Activated CD4-positive, alpha-beta T cell treated with anti-CD3 and anti-CD28 coated beads for 36 hours (primary cell): ENCODE measurements at regions of chr10 and their contacts with region 1.

Region 1: GRCh38 chr10:48363617-48364355 is 57.3 kb downstream of the MAPK8 start:
- DNase-seq: peak; percentile 48
- ATAC-seq: peak; percentile 44
- H3K4me3 Mint-ChIP-seq: no peak overlapping the region
- H3K27ac Mint-ChIP-seq: no peak overlapping the region
- H3K4me1 Mint-ChIP-seq: peaks cover 20% of the 10 kb centered on the region
- H3K27me3 Mint-ChIP-seq: no peaks in the 10 kb centered on the region

Region 2: GRCh38 chr10:48199580-48200377 is 164.0 kb before region 1 on chr10:
- CTCF ChIA-PET with region 1: no interaction called
- POLR2A ChIA-PET with region 1: no interaction called
- intact Hi-C with region 1: no loop called
- DNase-seq: no peak
- ATAC-seq: no peak
- H3K4me3 Mint-ChIP-seq: no peak overlapping the region
- H3K27ac Mint-ChIP-seq: no peak overlapping the region
- H3K4me1 Mint-ChIP-seq: peaks cover 4% of the 10 kb centered on the region
- H3K27me3 Mint-ChIP-seq: no peaks in the 10 kb centered on the region

Region 3: GRCh38 chr10:48306265-48306869 is 57.4 kb before region 1 on chr10 and contains the start of gene MAPK8:
- CTCF ChIA-PET with region 1: interaction called, 5 read pairs
- POLR2A ChIA-PET with region 1: no interaction called
- intact Hi-C with region 1: loop called in 1 of 2 experiments (anchors 2 kb)
- DNase-seq: peak; percentile 93
- ATAC-seq: peak; percentile 86
- H3K4me3 Mint-ChIP-seq: peak within 1 kb of the TSS; percentile 72
- H3K27ac Mint-ChIP-seq: peak within 1 kb of the TSS; percentile 58
- H3K4me1 Mint-ChIP-seq: peaks cover 30% of the 10 kb centered on the region
- H3K27me3 Mint-ChIP-seq: no peaks in the 10 kb centered on the region
- total RNA-seq, gene MAPK8: 35.7 to 40.0 TPM

Region 4: DNA sequence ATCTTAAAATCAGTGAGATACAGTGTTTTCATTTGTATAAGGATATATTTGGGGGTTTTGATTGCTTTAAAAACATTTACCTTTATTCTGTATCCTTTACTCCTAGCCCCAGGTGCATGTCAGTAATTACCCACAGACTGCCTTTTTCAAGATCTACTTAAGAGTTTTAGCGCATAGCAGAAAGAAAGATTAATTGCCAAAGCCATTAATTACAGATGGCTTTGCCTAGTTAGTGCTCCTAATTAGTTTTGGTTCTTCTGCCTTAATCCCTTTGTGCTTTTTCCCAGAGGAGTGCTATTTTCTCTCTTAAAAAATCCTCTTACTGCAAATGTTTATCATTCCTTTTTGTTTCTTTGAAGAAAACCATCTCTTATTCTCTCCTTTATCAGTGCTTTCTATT is 65.5 kb after region 1 on chr10:
- CTCF ChIA-PET with region 1: no interaction called
- POLR2A ChIA-PET with region 1: no interaction called
- intact Hi-C with region 1: loop called in 1 of 2 experiments (anchors 10 kb)
- DNase-seq: no peak
- ATAC-seq: no peak
- H3K4me3 Mint-ChIP-seq: no peak overlapping the region
- H3K27ac Mint-ChIP-seq: no peak overlapping the region
- H3K4me1 Mint-ChIP-seq: no peaks in the 10 kb centered on the region
- H3K27me3 Mint-ChIP-seq: no peaks in the 10 kb centered on the region

Region 5: GRCh38 chr10:48506147-48506917 is 142.5 kb after region 1 on chr10:
- CTCF ChIA-PET with region 1: interaction called, 6 read pairs
- POLR2A ChIA-PET with region 1: no interaction called
- intact Hi-C with region 1: loop called (anchors 1 kb)
- DNase-seq: peak; percentile 42
- ATAC-seq: no peak
- H3K4me3 Mint-ChIP-seq: no peak overlapping the region
- H3K27ac Mint-ChIP-seq: no peak overlapping the region
- H3K4me1 Mint-ChIP-seq: no peaks in the 10 kb centered on the region
- H3K27me3 Mint-ChIP-seq: no peaks in the 10 kb centered on the region

Region 6: GRCh38 chr10:48551861-48552591 is 188.2 kb after region 1 on chr10:
- CTCF ChIA-PET with region 1: interaction called, 3 read pairs
- POLR2A ChIA-PET with region 1: no interaction called
- intact Hi-C with region 1: loop called in 1 of 2 experiments (anchors 5 kb)
- DNase-seq: peak; percentile 51
- ATAC-seq: peak; percentile 58
- H3K4me3 Mint-ChIP-seq: no peak overlapping the region
- H3K27ac Mint-ChIP-seq: no peak overlapping the region
- H3K4me1 Mint-ChIP-seq: no peaks in the 10 kb centered on the region
- H3K27me3 Mint-ChIP-seq: no peaks in the 10 kb centered on the region

Region 7: DNA sequence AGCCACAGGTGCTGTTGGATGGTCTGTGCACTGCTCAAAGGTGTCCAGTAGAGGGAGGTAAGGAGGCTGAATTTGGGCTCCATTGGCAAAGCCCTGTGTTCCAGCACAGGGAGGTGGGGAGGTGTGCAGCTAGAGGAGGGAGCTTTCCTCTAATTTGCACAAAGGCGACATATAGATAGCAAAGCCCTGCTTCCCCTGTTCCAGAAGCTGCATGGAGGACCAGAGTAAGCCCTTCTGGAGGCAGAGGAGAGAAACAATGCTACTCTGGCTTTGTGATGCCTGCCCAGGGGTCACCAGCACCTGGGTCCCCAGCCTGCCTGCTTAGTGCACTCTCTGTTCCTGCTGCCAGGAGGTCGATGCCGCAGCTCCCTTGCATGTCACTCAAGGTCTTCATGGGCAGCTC is 244.5 kb after region 1 on chr10:
- CTCF ChIA-PET with region 1: no interaction called
- POLR2A ChIA-PET with region 1: no interaction called
- intact Hi-C with region 1: loop called in 1 of 2 experiments (anchors 5 kb)
- DNase-seq: peak; percentile 55
- ATAC-seq: peak; percentile 86
- H3K4me3 Mint-ChIP-seq: no peak overlapping the region
- H3K27ac Mint-ChIP-seq: no peak overlapping the region
- H3K4me1 Mint-ChIP-seq: peaks cover 6% of the 10 kb centered on the region
- H3K27me3 Mint-ChIP-seq: peaks cover 42% of the 10 kb centered on the region